ENCODE measurements at regions of chr22 and their contacts with region 1.

Region 1: DNA sequence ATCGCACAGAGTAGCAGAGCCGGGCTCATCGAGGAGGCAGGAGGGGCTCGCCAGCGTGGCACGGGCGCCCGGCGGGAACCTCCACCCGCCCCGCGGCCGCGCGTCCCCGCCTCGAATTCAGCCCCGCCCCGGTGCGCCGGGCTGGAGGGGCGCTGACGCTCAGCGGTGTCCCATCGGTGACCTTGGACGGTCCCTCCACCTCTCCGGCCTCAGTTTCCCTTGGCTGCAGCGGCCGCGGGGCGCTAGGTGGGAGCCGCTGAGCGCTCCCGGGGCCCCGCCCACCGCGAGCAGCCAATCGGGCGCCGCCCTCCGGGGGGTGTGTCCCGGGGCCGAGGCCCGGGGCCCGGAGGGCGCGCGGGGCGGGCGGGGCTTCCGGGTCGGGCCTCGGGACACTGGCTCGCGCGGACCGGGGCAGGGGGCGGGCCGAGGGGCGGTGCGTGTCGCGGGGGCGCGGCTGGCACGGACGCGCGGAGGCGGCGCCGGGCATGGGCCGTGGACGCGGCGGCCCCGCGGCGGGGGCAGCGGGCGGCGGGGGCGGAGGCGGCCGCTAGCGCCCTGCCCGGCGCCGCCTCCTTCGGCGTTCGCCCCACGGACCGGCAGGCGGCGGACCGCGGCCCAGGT is at the start of gene PPARA:
- DNase-seq: peak; percentile 93 to 98 (median 98)
- ATAC-seq: peak; percentile 90 to 92
- H3K4me3 ChIP-seq: peak within 1 kb of the TSS; percentile 99
- H3K27ac ChIP-seq: peak within 1 kb of the TSS; percentile 94
- H3K4me1 ChIP-seq: peaks cover 6% of the 10 kb centered on the region
- H3K27me3 ChIP-seq: no peaks in the 10 kb centered on the region
- total RNA-seq, gene PPARA: 63.6 to 85.2 (median 72.7) TPM

Region 2: DNA sequence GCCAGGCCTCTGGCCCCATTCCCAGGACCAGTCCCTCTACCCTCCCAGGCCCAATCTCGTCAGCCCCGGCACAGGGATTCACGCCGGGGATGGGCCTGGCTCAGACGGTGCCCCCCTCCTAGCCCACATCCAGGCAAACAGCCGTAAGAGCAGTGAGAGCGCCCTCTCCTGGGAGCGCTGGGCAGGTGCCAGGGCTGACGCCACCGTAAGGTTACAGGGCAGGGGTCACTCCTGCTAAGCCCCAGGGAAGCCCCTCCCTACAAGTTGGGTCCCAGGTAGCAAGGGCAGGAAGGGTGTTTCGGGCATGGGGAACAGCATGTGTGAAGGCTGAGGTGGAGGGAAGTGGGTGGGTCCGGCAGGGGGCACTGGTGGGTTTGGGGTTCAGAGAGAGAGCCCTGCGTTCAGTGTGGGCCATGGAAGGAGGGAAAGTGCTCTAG is 19.0 kb before region 1 on chr22:
- intact Hi-C with region 1: no loop called
- DNase-seq: peak; percentile 13 to 45 (median 36)
- ATAC-seq: no peak
- H3K4me3 ChIP-seq: no peak overlapping the region
- H3K27ac ChIP-seq: no peak overlapping the region
- H3K4me1 ChIP-seq: no peaks in the 10 kb centered on the region
- H3K27me3 ChIP-seq: no peaks in the 10 kb centered on the region

Region 3: DNA sequence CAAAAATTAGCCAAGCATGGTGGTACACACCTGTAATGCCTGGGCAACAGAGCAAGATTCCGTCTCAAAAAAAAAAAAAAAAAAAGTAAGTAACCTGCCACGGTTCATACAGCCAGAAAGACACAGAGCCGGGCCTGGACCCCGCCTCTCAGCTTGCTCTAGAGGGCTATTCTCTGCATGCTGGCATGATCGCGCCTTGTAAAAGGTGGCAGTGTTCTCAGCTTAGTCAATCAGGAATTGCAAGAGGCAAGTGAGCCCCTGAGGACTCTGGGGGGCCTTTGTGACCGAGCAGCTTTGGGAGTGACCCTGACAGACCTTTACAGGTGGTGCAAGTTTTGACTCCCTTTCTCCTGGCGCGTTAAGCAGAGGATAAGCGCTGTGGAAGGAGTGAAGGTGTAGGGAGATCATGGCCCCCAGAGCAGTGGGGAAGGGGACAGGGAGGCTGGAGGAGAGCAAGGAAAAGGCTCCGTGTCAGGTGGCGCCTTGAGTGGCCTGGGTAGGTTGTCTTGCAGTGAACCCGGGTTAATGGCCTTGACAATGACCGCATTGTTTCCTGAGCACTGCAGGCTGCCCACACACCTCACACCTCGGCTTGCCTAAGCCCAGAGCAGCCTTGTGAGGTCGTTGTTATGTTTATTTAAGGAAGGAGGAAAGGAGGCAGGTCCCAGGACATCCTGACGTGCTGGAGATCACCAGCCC is 51.1 kb after region 1 on chr22:
- intact Hi-C with region 1: loop called in 1 of 4 experiments (anchors 10 kb)
- DNase-seq: no peak
- ATAC-seq: peak in 1 of 2 donors; percentile 56
- H3K4me3 ChIP-seq: no peak overlapping the region
- H3K27ac ChIP-seq: peak overlapping the region; percentile 37
- H3K4me1 ChIP-seq: peaks cover 3% of the 10 kb centered on the region
- H3K27me3 ChIP-seq: no peaks in the 10 kb centered on the region

Region 4: GRCh38 chr22:46233231-46233630 is 83.1 kb after region 1 on chr22:
- intact Hi-C with region 1: loop called in 2 of 4 experiments (anchors 10 kb)
- DNase-seq: peak; percentile 56 to 76 (median 74)
- ATAC-seq: peak; percentile 77 to 87
- H3K4me3 ChIP-seq: no peak overlapping the region
- H3K27ac ChIP-seq: peak overlapping the region; percentile 8
- H3K4me1 ChIP-seq: no peaks in the 10 kb centered on the region
- H3K27me3 ChIP-seq: no peaks in the 10 kb centered on the region

Region 5: GRCh38 chr22:46250035-46250782 is 100.1 kb after region 1 on chr22 and contains the start of gene CDPF1:
- intact Hi-C with region 1: loop called in 1 of 4 experiments (anchors 10 kb)
- DNase-seq: peak; percentile 94 to 98 (median 97)
- ATAC-seq: peak; percentile 96 to 97
- H3K4me3 ChIP-seq: peak within 1 kb of the TSS; percentile 60
- H3K27ac ChIP-seq: peak within 1 kb of the TSS; percentile 98
- H3K4me1 ChIP-seq: peaks cover 12% of the 10 kb centered on the region
- H3K27me3 ChIP-seq: no peaks in the 10 kb centered on the region
- total RNA-seq, gene CDPF1: 8.9 to 10.4 (median 9.2) TPM

Measured in right cardiac atrium (tissue), 5 donors.